Lower leg skin (tissue), 4 donors: ENCODE measurements at regions of chr17 and their contacts with region 1.

Region 1: DNA sequence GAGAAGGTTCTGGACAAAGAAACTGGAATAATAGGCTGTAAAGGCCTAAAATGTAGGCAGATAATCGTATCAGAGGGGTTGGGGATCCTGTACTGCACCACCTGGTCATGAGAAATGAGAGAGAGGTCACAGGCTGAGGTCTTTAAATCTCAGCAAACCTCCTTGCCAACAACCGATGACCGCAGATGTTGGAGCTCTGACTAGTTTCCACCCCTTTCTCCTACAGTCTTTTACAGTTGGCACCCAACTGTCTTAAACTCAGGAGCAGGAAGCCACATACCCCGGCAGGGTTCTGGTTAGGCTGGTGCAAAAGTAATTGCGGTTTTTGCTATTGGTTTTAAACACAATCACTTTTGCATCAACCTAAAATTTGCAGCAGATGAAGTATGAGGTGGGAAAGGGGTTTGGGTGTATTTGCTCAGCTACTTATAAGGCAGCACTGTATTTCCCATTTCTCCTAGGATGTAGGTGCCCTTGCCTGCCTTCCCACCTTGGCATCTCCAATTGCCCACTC is 261.8 kb upstream of the MYOCD start:
- DNase-seq: no peak
- H3K4me3 ChIP-seq: no peak overlapping the region
- CTCF ChIP-seq: no peak
- POLR2A ChIP-seq: no peak

Region 2: DNA sequence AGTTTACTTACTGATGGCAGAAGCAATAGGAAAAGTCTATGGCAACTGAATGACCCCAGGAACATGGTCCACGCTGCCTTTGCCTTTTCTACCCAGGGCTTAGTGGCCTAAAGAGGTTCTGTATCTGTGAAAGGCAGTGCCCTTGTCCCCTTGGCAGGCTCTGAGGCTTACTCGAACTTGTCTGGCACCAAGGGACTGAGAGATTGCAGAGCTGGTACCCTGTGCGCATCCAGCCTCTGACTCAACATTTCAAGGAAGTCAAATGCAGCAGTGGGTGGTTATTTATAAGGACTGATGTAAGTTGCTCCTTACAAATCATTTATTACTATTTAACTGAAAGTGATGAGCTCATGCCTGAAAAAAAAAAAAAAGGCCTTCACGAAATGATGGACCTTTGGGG is 38.1 kb before region 1 on chr17:
- intact Hi-C with region 1: loop called (anchors 1 kb)
- DNase-seq: no peak
- H3K4me3 ChIP-seq: no peak overlapping the region
- CTCF ChIP-seq: no peak
- POLR2A ChIP-seq: no peak

Region 3: GRCh38 chr17:14080847-14081251 is 1676.9 kb after region 1 on chr17:
- intact Hi-C with region 1: no loop called
- DNase-seq: no peak
- H3K4me3 ChIP-seq: no peak overlapping the region
- CTCF ChIP-seq: no peak
- POLR2A ChIP-seq: no peak